Spleen (tissue), 13 donors: ENCODE measurements at regions of chr6 and their contacts with region 1.

Region 1: GRCh38 chr6:35146453-35146852 is 5.3 kb upstream of the TCP11 start:
- DNase-seq: no peak
- H3K4me3 ChIP-seq: no peak overlapping the region
- H3K27ac ChIP-seq: no peak overlapping the region
- H3K4me1 ChIP-seq: peaks cover 0 to 6% (median under 1%) of the 10 kb centered on the region in 6 donors
- H3K27me3 ChIP-seq: peaks cover 0 to 11% (median 2%) of the 10 kb centered on the region in 7 donors
- CTCF ChIP-seq: peak in 6 of 11 experiments; percentile 8 to 51 (median 46)
- POLR2A ChIP-seq: no peak

Region 2: GRCh38 chr6:34901930-34902329 is 244.5 kb before region 1 on chr6:
- intact Hi-C with region 1: no loop called
- DNase-seq: no peak
- H3K4me3 ChIP-seq: no peak overlapping the region
- H3K27ac ChIP-seq: no peak overlapping the region
- H3K4me1 ChIP-seq: peaks cover 0 to 58% (median 10%) of the 10 kb centered on the region in 6 donors
- H3K27me3 ChIP-seq: no peaks in the 10 kb centered on the region
- CTCF ChIP-seq: no peak
- POLR2A ChIP-seq: no peak

Region 3: GRCh38 chr6:35185302-35185681 is 38.8 kb after region 1 on chr6:
- intact Hi-C with region 1: no loop called
- DNase-seq: no peak
- H3K4me3 ChIP-seq: no peak overlapping the region
- H3K27ac ChIP-seq: no peak overlapping the region
- H3K4me1 ChIP-seq: peaks cover 0 to 16% (median 1%) of the 10 kb centered on the region in 6 donors
- H3K27me3 ChIP-seq: peaks cover 0 to 16% (median 6%) of the 10 kb centered on the region in 7 donors
- CTCF ChIP-seq: no peak
- POLR2A ChIP-seq: no peak

Region 4: GRCh38 chr6:35209081-35209480 is 62.6 kb after region 1 on chr6:
- intact Hi-C with region 1: loop called (anchors 5 kb)
- DNase-seq: no peak
- H3K4me3 ChIP-seq: no peak overlapping the region
- H3K27ac ChIP-seq: no peak overlapping the region
- H3K4me1 ChIP-seq: peaks cover 0 to 12% (median 10%) of the 10 kb centered on the region in 6 donors
- H3K27me3 ChIP-seq: peaks cover 3 to 87% (median 17%) of the 10 kb centered on the region in 7 donors
- CTCF ChIP-seq: no peak
- POLR2A ChIP-seq: no peak